H1 (cell line): ENCODE measurements at regions of chr2 and their contacts with region 1.

Region 1: GRCh38 chr2:219402665-219403515 is 15.2 kb upstream of the DNPEP start:
- DNase-seq: peak in 1 of 2 experiments; percentile 67
- H3K4me3 ChIP-seq: no peak overlapping the region
- H3K27ac ChIP-seq: no peak overlapping the region
- H3K4me1 ChIP-seq: peaks cover 3 to 22% (median 8%) of the 10 kb centered on the region in 4 experiments
- H3K27me3 ChIP-seq: peaks cover 0 to 2% (median 0%) of the 10 kb centered on the region in 4 experiments; a peak in 1 of 7 replicates
- CTCF ChIP-seq: peak; percentile 85 to 96 (median 93)
- EP300 ChIP-seq: no peak
- POLR2A ChIP-seq: no peak
- RAD21 ChIP-seq: peak; percentile 94 to 96

Region 2: GRCh38 chr2:219388127-219388844 is 14.6 kb before region 1 on chr2:
- CTCF ChIA-PET with region 1: interaction called, 142 read pairs
- POLR2A ChIA-PET with region 1: interaction called, 8 read pairs
- DNase-seq: peak; percentile 81 to 97
- H3K4me3 ChIP-seq: peak overlapping the region; percentile 36 to 75 (median 54)
- H3K27ac ChIP-seq: no peak overlapping the region
- H3K4me1 ChIP-seq: peaks cover 0 to 14% (median 4%) of the 10 kb centered on the region in 4 experiments; a peak in 5 of 7 replicates
- H3K27me3 ChIP-seq: no peaks in the 10 kb centered on the region; a peak in 1 of 7 replicates
- CTCF ChIP-seq: peak; percentile 33 to 67 (median 50)
- EP300 ChIP-seq: no peak; a peak in 1 of 3 replicates
- POLR2A ChIP-seq: no peak
- RAD21 ChIP-seq: peak in 1 of 2 experiments; percentile 24; a peak in 1 of 4 replicates

Region 3: DNA sequence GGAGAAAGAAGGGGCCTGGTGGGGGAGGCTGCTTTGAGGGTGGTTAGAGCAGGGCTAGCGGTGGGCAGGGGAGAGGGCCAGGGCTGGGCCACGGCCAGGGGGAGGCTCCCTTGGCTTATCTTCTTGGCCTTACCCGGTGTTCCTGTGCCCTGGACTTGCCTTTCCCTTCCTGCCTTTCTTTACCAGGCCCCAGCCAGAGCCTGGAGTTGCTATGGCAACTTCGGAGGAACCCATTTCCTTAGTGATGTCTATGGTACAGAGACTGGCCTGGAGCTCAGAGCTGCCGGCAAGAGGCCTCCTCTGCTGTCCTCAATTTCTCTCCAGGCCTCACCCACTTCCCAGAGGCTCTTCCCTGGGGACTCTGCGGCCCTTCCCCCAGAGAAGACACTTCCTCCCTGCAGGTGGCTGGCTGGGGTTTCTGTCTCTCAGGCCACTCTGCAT is 43.2 kb after region 1 on chr2:
- CTCF ChIA-PET with region 1: interaction called, 186 read pairs
- POLR2A ChIA-PET with region 1: interaction called, 7 read pairs
- DNase-seq: no peak
- H3K4me3 ChIP-seq: no peak overlapping the region
- H3K27ac ChIP-seq: no peak overlapping the region
- H3K4me1 ChIP-seq: peaks cover 0 to 29% (median 14%) of the 10 kb centered on the region in 4 experiments; a peak in 6 of 7 replicates
- H3K27me3 ChIP-seq: peaks cover 6 to 35% (median 28%) of the 10 kb centered on the region in 4 experiments
- CTCF ChIP-seq: no peak
- EP300 ChIP-seq: no peak
- POLR2A ChIP-seq: no peak
- RAD21 ChIP-seq: no peak

Region 4: GRCh38 chr2:219469186-219469724 is 66.4 kb after region 1 on chr2:
- CTCF ChIA-PET with region 1: interaction called, 49 read pairs
- POLR2A ChIA-PET with region 1: no interaction called
- DNase-seq: no peak
- H3K4me3 ChIP-seq: no peak overlapping the region
- H3K27ac ChIP-seq: no peak overlapping the region
- H3K4me1 ChIP-seq: no peaks in the 10 kb centered on the region
- H3K27me3 ChIP-seq: no peaks in the 10 kb centered on the region
- CTCF ChIP-seq: no peak
- EP300 ChIP-seq: no peak
- POLR2A ChIP-seq: no peak
- RAD21 ChIP-seq: no peak

Region 5: DNA sequence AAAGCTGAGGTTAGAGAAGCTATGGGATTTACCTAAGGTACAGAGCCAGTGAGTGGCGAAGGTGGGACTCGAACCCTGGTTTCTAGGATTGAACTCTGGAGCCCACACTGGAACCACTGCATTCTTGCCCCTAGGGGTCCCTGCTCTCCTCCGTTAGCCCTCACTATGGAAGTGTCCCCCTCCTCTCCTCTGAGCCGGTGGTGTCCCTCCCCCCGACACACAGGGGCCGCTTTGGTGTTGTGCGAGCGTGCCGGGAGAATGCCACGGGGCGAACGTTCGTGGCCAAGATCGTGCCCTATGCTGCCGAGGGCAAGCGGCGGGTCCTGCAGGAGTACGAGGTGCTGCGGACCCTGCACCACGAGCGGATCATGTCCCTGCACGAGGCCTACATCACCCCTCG is 87.3 kb after region 1 on chr2:
- CTCF ChIA-PET with region 1: interaction called, 83 read pairs
- POLR2A ChIA-PET with region 1: interaction called, 3 read pairs
- DNase-seq: no peak
- H3K4me3 ChIP-seq: no peak overlapping the region
- H3K27ac ChIP-seq: no peak overlapping the region
- H3K4me1 ChIP-seq: peaks cover 6 to 30% (median 22%) of the 10 kb centered on the region in 4 experiments
- H3K27me3 ChIP-seq: peaks cover 6 to 32% (median 21%) of the 10 kb centered on the region in 4 experiments
- CTCF ChIP-seq: peak in 2 of 3 experiments; percentile 65 to 74; a peak in 3 of 4 replicates
- EP300 ChIP-seq: no peak
- POLR2A ChIP-seq: no peak
- RAD21 ChIP-seq: peak; percentile 32 to 52

Region 6: GRCh38 chr2:219530048-219530963 is 127.4 kb after region 1 on chr2:
- CTCF ChIA-PET with region 1: interaction called, 407 read pairs
- POLR2A ChIA-PET with region 1: interaction called, 3 read pairs
- DNase-seq: peak in 1 of 2 experiments; percentile 97
- H3K4me3 ChIP-seq: peak overlapping the region in 2 of 4 experiments; percentile 22 to 56; a peak in 4 of 8 replicates
- H3K27ac ChIP-seq: no peak overlapping the region
- H3K4me1 ChIP-seq: peaks cover 0 to 8% (median 3%) of the 10 kb centered on the region in 4 experiments; a peak in 4 of 7 replicates
- H3K27me3 ChIP-seq: peaks cover 0 to 24% (median 10%) of the 10 kb centered on the region in 4 experiments; a peak in 6 of 7 replicates
- CTCF ChIP-seq: peak in 2 of 3 experiments; percentile 96 to 99; a peak in 3 of 4 replicates
- EP300 ChIP-seq: no peak
- POLR2A ChIP-seq: no peak
- RAD21 ChIP-seq: peak; percentile 99 to 100